ENCODE measurements at regions of chr5 and their contacts with region 1.

Region 1: DNA sequence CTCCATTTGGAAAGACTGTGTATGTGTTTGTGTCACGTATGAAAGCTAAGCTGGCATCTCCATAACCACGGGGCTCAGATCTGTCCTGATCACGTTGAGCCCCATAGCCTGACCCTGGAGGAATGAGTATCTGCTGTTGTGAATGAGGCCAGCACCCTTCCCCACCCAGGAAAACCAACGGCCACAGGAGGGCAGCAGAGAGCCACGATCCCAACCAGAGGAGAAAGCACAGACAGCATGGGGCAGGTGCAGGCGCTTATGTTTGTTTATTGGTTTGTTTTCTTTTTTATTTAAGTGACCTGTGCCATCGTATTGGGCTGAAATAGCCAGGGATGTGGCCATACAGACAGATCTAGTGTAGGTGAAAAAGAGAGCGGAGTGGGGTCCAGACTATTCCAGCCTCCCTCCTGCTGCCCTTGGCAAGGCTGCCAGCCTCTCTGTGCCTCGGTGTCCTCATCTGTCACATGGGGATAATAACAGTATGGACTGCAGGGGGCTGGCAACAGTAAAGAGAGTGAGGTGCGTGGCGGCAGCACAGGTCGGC is 12.0 kb downstream of the OR2V2 start:
- DNase-seq: peak; percentile 97
- H3K4me3 Mint-ChIP-seq: peak overlapping the region; percentile 11
- H3K27ac Mint-ChIP-seq: peak overlapping the region; percentile 85
- H3K4me1 Mint-ChIP-seq: peaks cover 33% of the 10 kb centered on the region
- H3K27me3 Mint-ChIP-seq: peaks cover 13% of the 10 kb centered on the region

Region 2: GRCh38 chr5:180784497-180785097 is 374.8 kb before region 1 on chr5:
- CTCF ChIA-PET with region 1: interaction called, 3 read pairs
- intact Hi-C with region 1: loop called (anchors 1 kb)
- DNase-seq: peak; percentile 89
- H3K4me3 Mint-ChIP-seq: no peak overlapping the region
- H3K27ac Mint-ChIP-seq: no peak overlapping the region
- H3K4me1 Mint-ChIP-seq: peaks cover 20% of the 10 kb centered on the region
- H3K27me3 Mint-ChIP-seq: no peaks in the 10 kb centered on the region

Region 3: GRCh38 chr5:180860887-180861822 is 298.2 kb before region 1 on chr5 and contains the start of gene ZFP62:
- CTCF ChIA-PET with region 1: no interaction called
- intact Hi-C with region 1: loop called (anchors 2 kb)
- DNase-seq: peak; percentile 86
- H3K4me3 Mint-ChIP-seq: peak within 1 kb of the TSS; percentile 95
- H3K27ac Mint-ChIP-seq: peak within 1 kb of the TSS; percentile 89
- H3K4me1 Mint-ChIP-seq: peaks cover 19% of the 10 kb centered on the region
- H3K27me3 Mint-ChIP-seq: no peaks in the 10 kb centered on the region
- total RNA-seq, gene ZFP62: 21.5 to 23.6 TPM

Region 4: GRCh38 chr5:181181650-181182565 is 22.6 kb after region 1 on chr5:
- CTCF ChIA-PET with region 1: interaction called, 5 read pairs
- intact Hi-C with region 1: loop called (anchors 1 kb)
- DNase-seq: peak; percentile 82
- H3K4me3 Mint-ChIP-seq: peak overlapping the region; percentile 20
- H3K27ac Mint-ChIP-seq: no peak overlapping the region
- H3K4me1 Mint-ChIP-seq: peaks cover 19% of the 10 kb centered on the region
- H3K27me3 Mint-ChIP-seq: peaks cover 4% of the 10 kb centered on the region

Region 5: GRCh38 chr5:181223058-181223728 is 63.8 kb after region 1 on chr5 and contains the start of gene TRIM41:
- CTCF ChIA-PET with region 1: no interaction called
- intact Hi-C with region 1: loop called (anchors 1 kb)
- DNase-seq: peak; percentile 97
- H3K4me3 Mint-ChIP-seq: peak within 1 kb of the TSS; percentile 96
- H3K27ac Mint-ChIP-seq: peak within 1 kb of the TSS; percentile 100
- H3K4me1 Mint-ChIP-seq: peaks cover 55% of the 10 kb centered on the region
- H3K27me3 Mint-ChIP-seq: peaks cover 6% of the 10 kb centered on the region
- total RNA-seq, gene TRIM41: 36.5 to 37.3 TPM

Measured in activated naive CD4-positive, alpha-beta T cell treated with anti-CD3 and anti-CD28 coated beads for 36 hours (primary cell).